ENCODE measurements at regions of chr2 and their contacts with region 1.

Region 1: GRCh38 chr2:169798718-169799592 is at the start of gene SSB:
- DNase-seq: peak; percentile 92 to 96
- ATAC-seq: peak; percentile 97 to 99 (median 99)
- H3K4me3 ChIP-seq: peak within 1 kb of the TSS; percentile 88
- H3K27ac ChIP-seq: peak within 1 kb of the TSS; percentile 83
- H3K4me1 ChIP-seq: peaks cover 18% of the 10 kb centered on the region
- H3K27me3 ChIP-seq: no peaks in the 10 kb centered on the region
- CTCF ChIP-seq: no peak
- total RNA-seq, gene SSB: 37.9 to 72.0 (median 48.0) TPM

Region 2: DNA sequence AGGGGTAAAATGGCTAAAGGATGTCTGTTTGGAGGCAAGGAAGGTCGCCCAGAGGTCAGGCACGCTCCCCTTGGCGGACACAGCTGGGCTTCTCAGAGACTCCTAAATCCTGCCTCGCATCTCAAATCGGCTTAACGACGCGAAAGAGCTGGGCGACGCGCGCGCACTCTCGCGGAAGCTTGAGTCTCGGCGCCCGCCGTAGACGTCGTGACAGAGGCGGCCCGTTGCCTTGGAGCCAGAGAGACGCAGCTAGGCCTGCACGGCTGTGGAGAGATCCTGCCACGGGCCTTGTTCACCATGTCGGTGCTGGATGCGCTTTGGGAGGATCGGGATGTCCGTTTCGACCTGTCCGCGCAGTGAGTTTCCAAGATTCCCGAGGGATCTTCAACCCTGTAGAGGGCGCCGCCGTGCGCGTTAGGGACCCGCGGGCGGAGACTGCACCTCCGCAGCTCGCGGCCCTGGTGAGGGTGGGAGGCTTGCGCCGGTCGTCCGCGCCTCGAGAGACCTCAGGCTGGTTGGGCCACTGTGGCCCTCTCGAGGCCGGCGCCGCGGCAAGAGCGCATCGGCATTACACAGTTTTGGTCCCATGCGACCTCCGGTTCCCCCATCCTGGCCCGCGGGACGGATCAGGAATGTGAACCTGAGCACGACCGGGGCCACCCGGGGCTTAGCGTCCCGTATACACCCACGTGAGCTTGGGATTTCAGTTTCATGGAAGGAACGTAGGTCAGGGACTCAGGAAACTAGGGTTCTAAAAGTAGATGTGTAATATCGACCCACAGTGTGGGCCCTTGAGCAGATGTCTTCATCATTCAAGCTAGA is 319.5 kb before region 1 on chr2 and contains the start of gene BBS5:
- intact Hi-C with region 1: loop called in 1 of 2 experiments (anchors 10 kb)
- DNase-seq: peak; percentile 86 to 92
- ATAC-seq: peak; percentile 91 to 98 (median 97)
- H3K4me3 ChIP-seq: peak within 1 kb of the TSS; percentile 73
- H3K27ac ChIP-seq: peak within 1 kb of the TSS; percentile 74
- H3K4me1 ChIP-seq: peaks cover 27% of the 10 kb centered on the region
- H3K27me3 ChIP-seq: no peaks in the 10 kb centered on the region
- CTCF ChIP-seq: peak; percentile 42
- total RNA-seq, gene BBS5: 8.1 to 12.3 (median 9.2) TPM

Region 3: DNA sequence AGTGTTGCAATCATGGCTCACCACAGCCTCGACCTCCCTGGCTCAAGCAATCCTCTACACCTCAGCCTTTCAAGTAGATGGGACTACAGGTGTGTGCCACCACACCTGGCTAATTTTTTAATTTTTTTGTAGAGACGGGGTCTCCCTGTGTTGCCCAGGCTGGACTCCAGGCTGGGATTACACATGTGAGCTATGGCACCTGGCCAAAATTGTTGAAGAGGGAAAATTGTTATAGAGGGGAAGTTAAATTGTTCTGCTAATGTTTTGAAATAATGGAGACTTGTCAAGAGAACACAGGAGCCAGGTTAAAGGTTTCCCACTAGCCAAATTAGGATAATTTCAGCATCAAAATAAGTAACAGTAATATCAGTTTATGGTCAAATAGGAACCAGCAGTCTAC is 189.7 kb before region 1 on chr2:
- intact Hi-C with region 1: loop called in 1 of 2 experiments (anchors 10 kb)
- DNase-seq: no peak
- ATAC-seq: no peak
- H3K4me3 ChIP-seq: no peak overlapping the region
- H3K27ac ChIP-seq: no peak overlapping the region
- H3K4me1 ChIP-seq: no peaks in the 10 kb centered on the region
- H3K27me3 ChIP-seq: no peaks in the 10 kb centered on the region
- CTCF ChIP-seq: no peak

Region 4: GRCh38 chr2:169694113-169694903 is 104.6 kb before region 1 on chr2 and contains the starts of genes CFAP210 and PHOSPHO2:
- intact Hi-C with region 1: no loop called
- DNase-seq: peak; percentile 100
- ATAC-seq: peak; percentile 99 to 100 (median 100)
- H3K4me3 ChIP-seq: peak within 1 kb of the TSS; percentile 74
- H3K27ac ChIP-seq: peak within 1 kb of the TSS; percentile 81
- H3K4me1 ChIP-seq: peaks cover 5% of the 10 kb centered on the region
- H3K27me3 ChIP-seq: no peaks in the 10 kb centered on the region
- CTCF ChIP-seq: no peak
- total RNA-seq, gene CFAP210: not detected
- total RNA-seq, gene PHOSPHO2: 0.86 to 2.3 (median 1.4) TPM

Measured in psoas muscle (tissue), 8 donors.